ENCODE measurements at regions of chr15 and their contacts with region 1.

Region 1: GRCh38 chr15:50675536-50676144 is 11.0 kb downstream of the TRPM7 start:
- DNase-seq: no peak
- ATAC-seq: peak in 1 of 4 donors; percentile 25
- H3K4me3 ChIP-seq: no peak overlapping the region
- H3K27ac ChIP-seq: no peak overlapping the region
- H3K4me1 ChIP-seq: peaks cover 5% of the 10 kb centered on the region
- H3K27me3 ChIP-seq: no peaks in the 10 kb centered on the region
- CTCF ChIP-seq: peak; percentile 78

Region 2: GRCh38 chr15:50886140-50886467 is 210.5 kb after region 1 on chr15:
- intact Hi-C with region 1: loop called (anchors 5 kb)
- DNase-seq: no peak
- ATAC-seq: no peak
- H3K4me3 ChIP-seq: no peak overlapping the region
- H3K27ac ChIP-seq: no peak overlapping the region
- H3K4me1 ChIP-seq: no peaks in the 10 kb centered on the region
- H3K27me3 ChIP-seq: no peaks in the 10 kb centered on the region
- CTCF ChIP-seq: no peak

Region 3: DNA sequence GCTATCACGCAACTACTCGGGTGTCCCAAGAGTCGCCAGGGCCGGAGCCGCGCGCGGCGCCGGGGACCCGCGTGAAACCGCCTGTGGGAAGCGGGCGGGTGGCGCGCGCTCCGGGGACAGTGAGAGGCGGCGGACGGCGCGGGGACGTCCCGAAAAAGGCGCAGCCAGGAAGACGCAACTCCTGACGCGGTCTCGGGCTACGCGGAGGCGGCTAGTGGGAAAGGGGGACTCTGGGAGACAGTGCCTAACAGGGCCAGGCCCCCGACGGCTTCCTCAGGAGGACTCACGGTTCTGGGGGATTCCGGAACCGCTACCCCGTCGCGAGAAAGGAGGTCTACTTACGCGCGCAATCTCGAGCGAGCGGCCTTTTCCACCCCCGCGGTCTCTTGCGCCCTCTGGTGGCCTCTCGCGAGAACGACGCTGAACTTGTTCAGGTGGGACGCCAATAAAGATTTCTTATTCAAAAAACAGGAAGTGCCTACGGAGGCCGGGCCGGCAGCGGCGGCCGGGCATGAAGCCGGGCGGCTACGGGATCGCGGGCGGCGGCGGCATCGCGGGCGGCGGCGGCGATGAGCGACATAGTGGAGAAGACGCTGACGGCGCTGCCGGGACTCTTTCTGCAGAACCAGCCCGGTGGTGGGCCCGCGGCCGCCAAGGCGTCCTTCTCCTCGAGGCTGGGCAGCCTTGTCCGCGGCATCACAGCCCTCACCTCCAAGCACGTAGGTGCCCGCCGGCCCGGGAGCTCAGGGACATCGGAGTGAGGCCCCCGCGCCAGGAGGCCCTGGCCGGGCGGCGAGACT is 232.8 kb after region 1 on chr15 and contains the start of gene AP4E1:
- intact Hi-C with region 1: loop called in 1 of 2 experiments (anchors 2 kb)
- DNase-seq: peak; percentile 92 to 96
- ATAC-seq: peak; percentile 89 to 94 (median 92)
- H3K4me3 ChIP-seq: peak within 1 kb of the TSS; percentile 98
- H3K27ac ChIP-seq: peak within 1 kb of the TSS; percentile 96
- H3K4me1 ChIP-seq: peaks cover 22% of the 10 kb centered on the region
- H3K27me3 ChIP-seq: no peaks in the 10 kb centered on the region
- CTCF ChIP-seq: peak; percentile 99
- total RNA-seq, gene AP4E1: 10.1 to 16.6 (median 13.2) TPM